Lower leg skin (tissue), 4 donors: ENCODE measurements at regions of chr9 and their contacts with region 1.

Region 1: DNA sequence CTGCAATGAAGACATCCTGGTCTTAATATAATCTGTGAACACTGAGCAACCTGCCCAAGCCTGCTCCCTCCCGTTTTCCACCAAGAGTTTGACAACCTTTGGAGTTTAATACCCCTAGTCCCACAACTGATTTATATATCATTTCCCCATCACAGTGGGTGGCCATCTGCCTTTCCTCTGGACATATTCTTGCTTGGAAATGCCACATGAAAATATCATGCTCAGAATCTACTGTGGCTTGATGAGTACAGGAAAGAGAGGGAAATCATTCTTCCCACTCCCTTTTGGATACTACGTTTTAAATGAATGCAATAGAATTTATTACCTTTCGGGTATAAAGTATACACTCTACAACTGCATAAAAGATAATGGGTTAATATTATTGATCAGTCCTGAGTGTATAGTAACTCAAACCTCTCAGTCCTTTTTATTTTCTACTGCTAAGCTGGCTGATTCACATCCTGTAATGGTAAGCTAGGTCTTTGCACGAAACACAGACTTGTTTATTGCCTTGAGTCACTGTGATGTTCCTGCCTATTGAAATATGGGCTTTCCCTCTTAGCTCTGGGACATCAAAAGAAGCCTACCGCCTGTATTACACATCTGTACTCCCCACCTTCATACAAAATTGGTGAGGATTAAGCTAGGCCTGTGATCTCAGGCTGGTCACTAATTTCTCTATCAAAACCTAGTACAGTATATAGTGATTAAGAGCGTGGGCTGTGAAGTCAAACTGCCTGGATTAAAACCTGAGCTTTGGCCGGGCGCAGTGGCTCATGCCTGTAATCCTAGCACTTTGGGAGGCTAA is 67.5 kb upstream of the NR5A1 start:
- DNase-seq: no peak
- H3K4me3 ChIP-seq: no peak overlapping the region
- CTCF ChIP-seq: no peak
- POLR2A ChIP-seq: no peak

Region 2: GRCh38 chr9:124632077-124632621 is 57.4 kb after region 1 on chr9:
- intact Hi-C with region 1: loop called (anchors 10 kb)
- DNase-seq: no peak
- H3K4me3 ChIP-seq: no peak overlapping the region
- CTCF ChIP-seq: no peak
- POLR2A ChIP-seq: no peak

Region 3: DNA sequence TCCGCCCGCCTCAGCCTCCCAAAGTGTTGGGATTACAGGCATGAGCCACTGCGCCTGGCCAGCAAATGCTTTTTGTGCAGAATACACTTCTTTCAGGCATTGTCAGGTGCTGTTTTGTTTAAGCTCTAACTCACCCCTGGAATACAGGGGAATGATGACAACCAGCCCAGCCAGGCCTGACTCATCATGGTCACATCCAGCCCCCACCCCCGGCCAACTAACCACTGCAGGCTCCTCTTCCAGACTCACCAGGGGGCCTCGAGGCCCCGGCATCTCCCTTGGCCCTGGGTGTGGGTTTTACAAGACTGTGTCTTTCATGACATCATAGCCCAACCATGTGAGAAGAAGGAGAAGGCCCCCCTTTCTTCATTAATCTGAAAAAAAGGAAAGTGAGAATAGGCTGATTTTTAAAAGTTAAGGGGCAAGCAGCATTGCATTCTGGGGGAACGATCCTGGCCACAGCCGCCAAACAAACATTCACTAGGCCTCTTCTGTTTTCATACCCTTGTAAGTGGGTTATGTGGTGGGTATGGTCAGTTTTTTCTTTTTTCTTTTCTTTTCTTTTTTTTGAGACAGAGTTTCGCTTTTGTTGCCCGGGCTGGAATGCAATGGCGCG is 237.8 kb after region 1 on chr9:
- intact Hi-C with region 1: no loop called
- DNase-seq: peak in 1 of 2 donors; percentile 94
- H3K4me3 ChIP-seq: no peak overlapping the region
- CTCF ChIP-seq: no peak
- POLR2A ChIP-seq: no peak